Dorsolateral prefrontal cortex (tissue), 120 donors: ENCODE measurements at regions of chr6 and their contacts with region 1.

Region 1: DNA sequence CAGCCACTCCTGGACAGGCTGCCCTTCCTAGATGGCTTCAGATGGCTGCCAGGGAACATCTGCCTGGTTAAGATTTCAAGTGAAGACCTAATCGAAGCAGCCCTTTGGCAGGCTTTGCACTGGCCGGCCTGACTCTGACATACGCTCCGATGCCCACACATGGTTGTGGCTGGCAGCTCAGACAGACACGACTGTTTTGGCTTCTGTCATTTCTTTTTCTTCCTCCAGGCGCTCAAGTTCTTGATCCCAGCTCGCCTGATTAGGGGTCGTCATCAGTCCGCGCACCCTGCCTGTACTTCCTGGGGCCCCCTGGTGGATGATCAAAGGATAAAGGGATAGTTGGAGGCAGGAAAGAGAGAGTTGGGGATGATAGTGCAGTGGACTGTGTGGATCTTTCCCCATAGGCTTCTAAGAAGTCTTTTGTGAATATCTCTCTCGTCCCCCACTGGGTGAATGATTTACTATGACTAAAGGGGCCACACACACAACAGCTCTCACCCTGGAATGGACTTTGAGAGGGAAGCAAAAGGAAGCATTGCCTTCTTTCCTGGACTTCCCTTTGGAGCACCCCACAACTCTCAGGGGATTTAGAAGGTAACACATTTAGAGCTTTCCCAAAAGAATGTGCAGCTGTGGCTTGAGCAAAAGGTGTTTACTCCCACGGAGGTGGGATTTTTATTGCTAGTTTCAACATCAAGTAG is 21.4 kb upstream of the TRAM2 start:
- DNase-seq: peak in 6 of 10 donors; percentile 20 to 60 (median 44)
- H3K4me3 ChIP-seq: peak overlapping the region in 52 of 59 donors; percentile 1 to 61 (median 40)
- H3K27ac ChIP-seq: peak overlapping the region in 3 of 59 donors; percentile 25 to 64 (median 27)
- H3K27me3 ChIP-seq: no peaks in the 10 kb centered on the region
- CTCF ChIP-seq: peak; percentile 33 to 82 (median 66)

Region 2: GRCh38 chr6:52650941-52651340 is 52.7 kb after region 1 on chr6:
- intact Hi-C with region 1: loop called in 1 of 2 experiments (anchors 5 kb)
- DNase-seq: no peak
- H3K4me3 ChIP-seq: no peak overlapping the region
- H3K27ac ChIP-seq: no peak overlapping the region
- H3K27me3 ChIP-seq: peaks cover 0 to 12% (median 0%) of the 10 kb centered on the region in 45 donors
- CTCF ChIP-seq: no peak

Region 3: GRCh38 chr6:52815167-52816092 is 217.2 kb after region 1 on chr6:
- intact Hi-C with region 1: no loop called
- DNase-seq: peak in 1 of 10 donors; percentile 12
- H3K4me3 ChIP-seq: no peak overlapping the region
- H3K27ac ChIP-seq: no peak overlapping the region
- H3K27me3 ChIP-seq: no peaks in the 10 kb centered on the region
- CTCF ChIP-seq: peak in 55 of 56 donors; percentile 27 to 67 (median 56)